Transverse colon (tissue), 4 donors: ENCODE measurements at regions of chr10 and their contacts with region 1.

Region 1: DNA sequence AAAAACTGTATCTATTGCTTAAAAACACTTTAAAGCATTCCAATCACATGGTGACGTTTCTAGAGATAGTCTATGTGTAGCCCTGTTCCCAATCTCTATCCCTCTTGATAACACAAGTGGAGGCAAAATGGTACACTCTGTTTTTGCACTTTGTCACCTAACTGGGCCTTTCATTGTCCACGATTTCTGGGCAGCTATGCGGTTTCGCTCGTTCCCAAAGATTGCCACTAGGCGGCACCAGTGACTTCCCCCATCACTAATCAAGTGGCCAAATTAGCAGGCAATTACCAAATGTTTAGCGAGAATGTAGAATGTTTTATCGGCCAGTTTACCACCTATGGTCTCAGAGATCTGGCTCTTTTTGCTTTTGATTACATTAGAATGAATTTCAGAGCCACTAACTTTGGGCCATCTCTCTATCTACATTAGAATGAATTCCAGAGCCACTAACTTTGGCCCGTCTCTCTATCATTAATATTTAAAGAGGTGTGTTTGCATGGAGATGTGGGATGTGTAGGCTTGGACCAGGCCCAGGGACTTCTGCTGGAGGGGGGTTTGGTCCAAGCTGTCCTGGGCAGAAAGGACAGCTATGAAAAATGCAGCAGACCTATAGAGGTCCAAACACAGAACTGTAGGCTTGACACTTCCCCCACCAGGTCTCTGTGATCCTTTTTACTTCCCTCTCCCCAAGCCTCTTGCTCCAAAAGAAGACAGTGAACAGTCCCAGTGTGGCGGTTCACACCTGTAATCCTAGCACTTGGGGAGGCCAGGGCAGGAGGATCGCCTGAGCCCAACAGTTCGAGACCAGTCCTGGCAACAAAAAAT is 90.1 kb downstream of the EPC1 start:
- DNase-seq: peak; percentile 76
- H3K4me3 ChIP-seq: no peak overlapping the region
- H3K27ac ChIP-seq: no peak overlapping the region
- H3K4me1 ChIP-seq: peaks cover 0 to 4% (median 0%) of the 10 kb centered on the region in 4 donors
- H3K27me3 ChIP-seq: no peaks in the 10 kb centered on the region
- CTCF ChIP-seq: peak; percentile 85 to 89 (median 87)
- EP300 ChIP-seq: no peak
- POLR2A ChIP-seq: no peak

Region 2: DNA sequence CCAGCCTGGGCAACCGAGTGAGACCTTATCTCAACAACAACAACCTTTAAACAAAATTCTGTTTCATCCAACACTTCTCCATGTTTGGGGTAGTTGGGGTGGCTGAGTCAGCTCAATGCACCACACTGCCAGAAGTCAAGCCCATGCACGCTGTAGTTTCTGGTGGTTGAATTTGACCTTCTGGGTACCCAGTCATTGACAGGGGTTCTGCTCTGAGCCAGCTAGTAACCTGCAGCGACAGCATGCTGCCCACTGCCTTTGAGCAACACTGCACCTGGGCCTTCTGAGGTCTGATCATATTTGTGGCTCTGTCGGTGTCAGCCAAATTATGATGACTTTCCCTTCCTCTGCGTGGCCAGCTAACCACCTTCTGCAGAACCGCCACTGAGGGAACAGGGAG is 1140.6 kb before region 1 on chr10:
- in situ Hi-C with region 1: no loop called
- intact Hi-C with region 1: no loop called
- DNase-seq: no peak
- H3K4me3 ChIP-seq: no peak overlapping the region
- H3K27ac ChIP-seq: no peak overlapping the region
- H3K4me1 ChIP-seq: peaks cover 0 to 6% (median 0%) of the 10 kb centered on the region in 4 donors
- H3K27me3 ChIP-seq: no peaks in the 10 kb centered on the region
- CTCF ChIP-seq: no peak
- EP300 ChIP-seq: no peak
- POLR2A ChIP-seq: no peak

Region 3: GRCh38 chr10:32095116-32095733 is 161.6 kb before region 1 on chr10:
- in situ Hi-C with region 1: no loop called
- intact Hi-C with region 1: no loop called
- DNase-seq: no peak
- H3K4me3 ChIP-seq: no peak overlapping the region
- H3K27ac ChIP-seq: peak overlapping the region in 3 of 4 donors; percentile 26 to 61 (median 40)
- H3K4me1 ChIP-seq: peaks cover 5 to 19% (median 8%) of the 10 kb centered on the region in 4 donors
- H3K27me3 ChIP-seq: no peaks in the 10 kb centered on the region
- CTCF ChIP-seq: no peak
- EP300 ChIP-seq: no peak
- POLR2A ChIP-seq: no peak

Region 4: GRCh38 chr10:32340596-32341180 is 83.9 kb after region 1 on chr10:
- in situ Hi-C with region 1: loop called in 2 of 4 experiments (anchors 5 to 10 kb)
- intact Hi-C with region 1: loop called (anchors 5 kb)
- DNase-seq: no peak
- H3K4me3 ChIP-seq: no peak overlapping the region
- H3K27ac ChIP-seq: no peak overlapping the region
- H3K4me1 ChIP-seq: peaks cover 50 to 96% (median 56%) of the 10 kb centered on the region in 4 donors
- H3K27me3 ChIP-seq: no peaks in the 10 kb centered on the region
- CTCF ChIP-seq: no peak
- EP300 ChIP-seq: no peak
- POLR2A ChIP-seq: no peak

Region 5: GRCh38 chr10:32367793-32368453 is 111.1 kb after region 1 on chr10:
- in situ Hi-C with region 1: loop called in 1 of 4 experiments (anchors 25 kb)
- intact Hi-C with region 1: no loop called
- DNase-seq: peak; percentile 84
- H3K4me3 ChIP-seq: peak overlapping the region in 1 of 4 donors; percentile 9
- H3K27ac ChIP-seq: peak overlapping the region in 2 of 4 donors; percentile 18 to 46
- H3K4me1 ChIP-seq: peaks cover under 1 to 61% (median 21%) of the 10 kb centered on the region in 4 donors
- H3K27me3 ChIP-seq: no peaks in the 10 kb centered on the region
- CTCF ChIP-seq: peak; percentile 78 to 84 (median 80)
- EP300 ChIP-seq: no peak
- POLR2A ChIP-seq: no peak

Region 6: DNA sequence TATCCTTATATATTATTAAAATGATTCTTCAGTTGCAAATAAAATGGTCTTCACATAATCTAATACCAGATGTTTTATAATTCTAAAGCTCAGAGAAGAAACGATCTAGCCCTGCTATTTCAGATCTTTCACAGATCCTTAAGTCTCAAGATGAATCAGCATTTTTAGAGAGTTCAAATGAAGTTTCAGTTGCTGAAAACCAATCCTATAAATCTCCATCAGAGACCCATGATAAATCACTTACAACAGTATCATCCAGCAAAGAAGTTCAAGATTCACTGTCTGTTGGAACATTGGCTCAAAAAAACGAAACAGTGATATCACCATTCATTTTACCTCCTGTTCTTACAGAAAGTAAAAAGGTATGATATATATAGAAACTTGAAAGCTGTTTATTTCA is 326.1 kb after region 1 on chr10:
- in situ Hi-C with region 1: no loop called
- intact Hi-C with region 1: no loop called
- DNase-seq: no peak
- H3K4me3 ChIP-seq: no peak overlapping the region
- H3K27ac ChIP-seq: no peak overlapping the region
- H3K4me1 ChIP-seq: no peaks in the 10 kb centered on the region
- H3K27me3 ChIP-seq: no peaks in the 10 kb centered on the region
- CTCF ChIP-seq: no peak
- EP300 ChIP-seq: no peak
- POLR2A ChIP-seq: no peak